Body of pancreas (tissue), 4 donors: ENCODE measurements at regions of chr1 and their contacts with region 1.

Region 1: GRCh38 chr1:26799479-26800142 is 11.9 kb downstream of the PIGV start:
- DNase-seq: peak in 1 of 4 donors; percentile 28
- ATAC-seq: peak; percentile 50
- H3K4me3 ChIP-seq: no peak overlapping the region
- H3K27ac ChIP-seq: peak overlapping the region in 2 of 4 donors; percentile 32 to 57
- H3K4me1 ChIP-seq: peaks cover 4% of the 10 kb centered on the region
- H3K27me3 ChIP-seq: no peaks in the 10 kb centered on the region
- CTCF ChIP-seq: no peak
- POLR2A ChIP-seq: no peak

Region 2: DNA sequence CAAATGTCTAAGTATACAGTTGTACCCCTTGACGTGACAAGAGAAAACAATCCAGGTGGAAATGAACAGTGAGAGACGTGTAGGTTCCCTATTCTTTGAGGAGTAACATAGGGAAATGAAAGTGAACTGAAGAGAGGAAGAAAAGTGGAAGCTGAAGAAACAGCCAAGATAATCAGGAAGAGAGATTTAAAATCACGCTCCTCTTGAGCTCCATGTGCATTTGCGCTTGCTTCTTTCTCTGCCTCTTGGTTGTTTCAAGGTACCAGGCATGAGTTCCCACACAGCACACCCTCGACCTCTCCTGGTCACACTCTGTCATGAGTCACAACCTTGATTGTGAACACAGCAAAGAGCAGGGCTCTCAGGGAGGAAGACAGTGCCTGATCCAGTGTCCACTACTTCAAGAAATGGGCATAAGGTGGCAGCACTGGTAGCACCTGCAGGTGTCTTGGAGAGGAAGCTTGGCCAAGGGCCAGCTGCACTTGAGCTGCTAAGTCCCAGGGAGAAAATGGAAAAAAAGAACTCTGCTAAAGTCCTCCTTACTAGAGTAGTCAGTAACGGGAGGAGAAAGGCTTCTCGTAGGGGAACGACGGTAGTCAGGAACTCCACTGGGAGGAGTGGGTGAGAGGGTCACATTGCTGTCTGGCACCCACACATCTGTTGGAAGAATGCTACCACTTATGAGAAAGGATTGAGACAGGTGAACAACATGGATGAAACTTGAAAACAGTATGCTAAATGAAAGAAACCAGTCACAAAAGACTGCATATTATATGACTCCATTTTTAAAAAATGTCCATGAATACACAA is 122.1 kb before region 1 on chr1:
- intact Hi-C with region 1: loop called (anchors 10 kb)
- DNase-seq: peak; percentile 91 to 98 (median 97)
- ATAC-seq: peak; percentile 100
- H3K4me3 ChIP-seq: no peak overlapping the region
- H3K27ac ChIP-seq: peak overlapping the region in 3 of 4 donors; percentile 50 to 62 (median 61)
- H3K4me1 ChIP-seq: peaks cover 16% of the 10 kb centered on the region
- H3K27me3 ChIP-seq: no peaks in the 10 kb centered on the region
- CTCF ChIP-seq: peak; percentile 54 to 97 (median 93)
- POLR2A ChIP-seq: peak in 2 of 3 donors; percentile 25 to 32

Region 3: GRCh38 chr1:27057801-27058625 is 258.4 kb after region 1 on chr1:
- intact Hi-C with region 1: no loop called
- DNase-seq: no peak
- ATAC-seq: no peak
- H3K4me3 ChIP-seq: no peak overlapping the region
- H3K27ac ChIP-seq: no peak overlapping the region
- H3K4me1 ChIP-seq: no peaks in the 10 kb centered on the region
- H3K27me3 ChIP-seq: no peaks in the 10 kb centered on the region
- CTCF ChIP-seq: no peak
- POLR2A ChIP-seq: no peak